ENCODE measurements at regions of chr1 and their contacts with region 1.

Region 1: GRCh38 chr1:218679988-218680748 is 335.0 kb downstream of the TGFB2 start:
- DNase-seq: peak; percentile 46
- H3K4me3 Mint-ChIP-seq: no peak overlapping the region
- H3K27ac Mint-ChIP-seq: peak overlapping the region; percentile 0
- H3K4me1 Mint-ChIP-seq: no peaks in the 10 kb centered on the region
- H3K27me3 Mint-ChIP-seq: no peaks in the 10 kb centered on the region
- CTCF ChIP-seq: no peak

Region 2: GRCh38 chr1:218390618-218391017 is 289.6 kb before region 1 on chr1:
- CTCF ChIA-PET with region 1: no interaction called
- POLR2A ChIA-PET with region 1: no interaction called
- intact Hi-C with region 1: no loop called
- DNase-seq: peak; percentile 71
- H3K4me3 Mint-ChIP-seq: no peak overlapping the region
- H3K27ac Mint-ChIP-seq: peak overlapping the region; percentile 4
- H3K4me1 Mint-ChIP-seq: peaks cover 15% of the 10 kb centered on the region
- H3K27me3 Mint-ChIP-seq: no peaks in the 10 kb centered on the region
- CTCF ChIP-seq: no peak

Region 3: DNA sequence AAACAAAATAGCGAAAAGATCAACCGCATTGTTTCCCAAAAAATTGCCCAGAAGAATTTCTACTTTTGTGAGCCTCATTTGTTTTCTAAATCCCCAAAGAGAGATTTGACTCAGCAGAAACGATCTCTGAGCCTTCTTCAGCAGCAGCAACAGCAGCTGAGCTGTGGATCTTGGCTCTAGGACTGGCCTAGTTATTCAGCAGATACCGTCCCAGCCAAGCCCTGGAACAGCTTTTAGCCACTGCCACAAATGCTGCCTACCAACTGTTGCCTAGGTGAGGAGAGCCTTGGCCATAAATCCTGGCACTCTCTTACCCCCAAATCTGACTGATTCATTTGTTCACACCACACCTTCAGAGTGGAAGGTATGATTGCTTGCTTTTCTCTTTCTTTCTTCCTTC is 14.9 kb before region 1 on chr1:
- CTCF ChIA-PET with region 1: interaction called, 6 read pairs
- POLR2A ChIA-PET with region 1: interaction called, 14 read pairs
- intact Hi-C with region 1: no loop called
- DNase-seq: peak; percentile 76
- H3K4me3 Mint-ChIP-seq: peak overlapping the region; percentile 61
- H3K27ac Mint-ChIP-seq: peak overlapping the region; percentile 91
- H3K4me1 Mint-ChIP-seq: peaks cover 36% of the 10 kb centered on the region
- H3K27me3 Mint-ChIP-seq: no peaks in the 10 kb centered on the region
- CTCF ChIP-seq: no peak

Region 4: DNA sequence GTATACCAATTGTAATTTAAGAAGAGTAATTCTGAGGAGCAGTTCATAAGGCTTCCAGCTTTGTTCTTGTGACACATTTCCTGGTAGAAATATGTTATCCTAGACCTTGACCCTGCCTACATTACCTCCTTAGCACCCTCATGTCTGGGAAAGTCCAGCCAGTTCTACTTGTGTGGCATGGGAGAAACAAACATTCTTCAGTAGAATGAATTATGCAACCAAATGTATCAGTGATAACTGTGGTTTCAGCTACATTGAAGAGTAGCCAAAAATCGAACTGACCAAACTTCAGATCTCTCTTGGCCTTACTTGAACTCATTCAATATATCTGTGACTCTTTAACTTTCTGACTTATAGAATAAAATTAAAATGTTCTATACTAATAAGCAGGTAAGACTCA is 185.4 kb after region 1 on chr1:
- CTCF ChIA-PET with region 1: no interaction called
- POLR2A ChIA-PET with region 1: no interaction called
- intact Hi-C with region 1: no loop called
- DNase-seq: peak; percentile 77
- H3K4me3 Mint-ChIP-seq: no peak overlapping the region
- H3K27ac Mint-ChIP-seq: no peak overlapping the region
- H3K4me1 Mint-ChIP-seq: peaks cover 13% of the 10 kb centered on the region
- H3K27me3 Mint-ChIP-seq: no peaks in the 10 kb centered on the region
- CTCF ChIP-seq: no peak

Region 5: GRCh38 chr1:219365451-219365850 is 685.3 kb after region 1 on chr1:
- CTCF ChIA-PET with region 1: no interaction called
- POLR2A ChIA-PET with region 1: no interaction called
- intact Hi-C with region 1: no loop called
- DNase-seq: no peak
- H3K4me3 Mint-ChIP-seq: no peak overlapping the region
- H3K27ac Mint-ChIP-seq: no peak overlapping the region
- H3K4me1 Mint-ChIP-seq: no peaks in the 10 kb centered on the region
- H3K27me3 Mint-ChIP-seq: peaks cover 96% of the 10 kb centered on the region
- CTCF ChIP-seq: no peak

Region 6: DNA sequence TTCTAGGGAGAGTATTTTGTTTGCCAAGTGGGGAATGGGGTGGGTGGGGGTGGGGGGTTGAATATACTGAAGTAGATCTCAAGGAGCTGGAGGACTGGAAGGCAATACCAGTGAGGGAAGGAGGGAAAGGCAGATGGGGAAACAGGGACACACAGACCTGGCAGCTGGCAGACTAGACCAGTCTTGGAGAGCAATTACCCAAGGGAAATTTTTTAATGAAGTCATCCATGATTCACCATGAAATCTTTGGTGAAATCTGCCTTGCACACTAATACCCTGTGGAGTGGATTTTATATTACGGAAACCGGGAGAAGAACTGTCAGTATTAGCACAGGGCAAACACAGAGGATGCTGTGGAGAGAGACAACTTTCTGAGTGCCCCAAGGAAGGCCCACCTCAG is 1818.0 kb after region 1 on chr1:
- CTCF ChIA-PET with region 1: no interaction called
- POLR2A ChIA-PET with region 1: no interaction called
- intact Hi-C with region 1: no loop called
- DNase-seq: peak; percentile 74
- H3K4me3 Mint-ChIP-seq: no peak overlapping the region
- H3K27ac Mint-ChIP-seq: peak overlapping the region; percentile 14
- H3K4me1 Mint-ChIP-seq: peaks cover 19% of the 10 kb centered on the region
- H3K27me3 Mint-ChIP-seq: no peaks in the 10 kb centered on the region
- CTCF ChIP-seq: no peak